Activated CD4-positive, alpha-beta memory T cell treated with anti-CD3 and anti-CD28 coated beads for 36 hours (primary cell): ENCODE measurements at regions of chr12 and their contacts with region 1.

Region 1: DNA sequence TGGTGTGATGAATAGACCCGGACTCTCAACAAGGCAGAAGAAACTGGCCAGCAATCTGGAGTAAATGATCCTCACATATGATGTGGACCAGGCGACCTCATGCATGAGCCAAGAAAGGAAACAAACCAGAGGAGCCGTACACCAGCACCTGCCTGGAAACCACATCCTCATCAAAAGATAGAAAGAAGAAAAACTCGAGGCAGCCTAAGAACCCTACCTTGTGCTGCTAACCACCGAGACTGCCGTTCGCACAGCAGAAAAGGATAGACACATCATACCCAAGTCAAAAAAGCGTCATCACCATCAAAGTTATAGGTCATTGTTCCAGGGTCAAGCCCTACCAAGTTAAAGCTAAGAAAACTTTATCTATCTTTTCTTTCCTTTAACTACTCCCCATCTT is 66.7 kb downstream of the RESF1 start:
- DNase-seq: peak; percentile 80
- H3K4me3 Mint-ChIP-seq: peak overlapping the region; percentile 42
- H3K27ac Mint-ChIP-seq: peak overlapping the region; percentile 74
- H3K4me1 Mint-ChIP-seq: peaks cover 24% of the 10 kb centered on the region
- H3K27me3 Mint-ChIP-seq: no peaks in the 10 kb centered on the region

Region 2: GRCh38 chr12:31849090-31849687 is 176.7 kb before region 1 on chr12:
- CTCF ChIA-PET with region 1: no interaction called
- POLR2A ChIA-PET with region 1: no interaction called
- intact Hi-C with region 1: no loop called
- DNase-seq: no peak
- H3K4me3 Mint-ChIP-seq: no peak overlapping the region
- H3K27ac Mint-ChIP-seq: no peak overlapping the region
- H3K4me1 Mint-ChIP-seq: no peaks in the 10 kb centered on the region
- H3K27me3 Mint-ChIP-seq: no peaks in the 10 kb centered on the region

Region 3: GRCh38 chr12:31966558-31967205 is 59.2 kb before region 1 on chr12:
- CTCF ChIA-PET with region 1: interaction called, 3 read pairs
- POLR2A ChIA-PET with region 1: no interaction called
- intact Hi-C with region 1: loop called (anchors 5 kb)
- DNase-seq: peak; percentile 46
- H3K4me3 Mint-ChIP-seq: peak overlapping the region; percentile 59
- H3K27ac Mint-ChIP-seq: peak overlapping the region; percentile 97
- H3K4me1 Mint-ChIP-seq: peaks cover 82% of the 10 kb centered on the region
- H3K27me3 Mint-ChIP-seq: no peaks in the 10 kb centered on the region

Region 4: DNA sequence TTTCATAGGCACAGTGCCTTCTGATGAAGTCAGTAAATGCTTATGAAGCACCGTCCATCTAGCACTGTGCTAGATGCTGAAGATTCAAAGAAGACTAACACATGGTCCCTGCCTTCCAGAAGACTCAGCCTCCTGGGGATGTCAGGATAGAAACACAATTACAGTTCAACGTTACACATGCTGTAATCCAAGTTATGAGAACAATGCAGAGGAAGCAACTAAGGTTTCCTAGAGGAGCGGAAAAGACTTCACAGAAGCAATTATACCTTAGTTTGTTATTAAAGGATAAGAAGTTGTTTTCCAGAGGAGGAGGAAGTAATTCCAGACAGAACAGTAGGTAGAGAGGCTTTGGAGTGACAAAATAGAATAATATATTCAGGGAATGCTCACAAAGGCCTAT is 306.5 kb after region 1 on chr12:
- CTCF ChIA-PET with region 1: no interaction called
- POLR2A ChIA-PET with region 1: no interaction called
- intact Hi-C with region 1: no loop called
- DNase-seq: no peak
- H3K4me3 Mint-ChIP-seq: no peak overlapping the region
- H3K27ac Mint-ChIP-seq: no peak overlapping the region
- H3K4me1 Mint-ChIP-seq: peaks cover 5% of the 10 kb centered on the region
- H3K27me3 Mint-ChIP-seq: no peaks in the 10 kb centered on the region